ENCODE measurements at regions of chr22 and their contacts with region 1.

Region 1: GRCh38 chr22:36144886-36145541 is 15.5 kb downstream of the APOL3 start:
- DNase-seq: peak; percentile 51
- H3K4me3 ChIP-seq: no peak overlapping the region
- H3K27ac ChIP-seq: peak overlapping the region; percentile 45
- H3K4me1 ChIP-seq: peaks cover 46% of the 10 kb centered on the region
- H3K27me3 ChIP-seq: no peaks in the 10 kb centered on the region
- CTCF ChIP-seq: peak; percentile 85

Region 2: DNA sequence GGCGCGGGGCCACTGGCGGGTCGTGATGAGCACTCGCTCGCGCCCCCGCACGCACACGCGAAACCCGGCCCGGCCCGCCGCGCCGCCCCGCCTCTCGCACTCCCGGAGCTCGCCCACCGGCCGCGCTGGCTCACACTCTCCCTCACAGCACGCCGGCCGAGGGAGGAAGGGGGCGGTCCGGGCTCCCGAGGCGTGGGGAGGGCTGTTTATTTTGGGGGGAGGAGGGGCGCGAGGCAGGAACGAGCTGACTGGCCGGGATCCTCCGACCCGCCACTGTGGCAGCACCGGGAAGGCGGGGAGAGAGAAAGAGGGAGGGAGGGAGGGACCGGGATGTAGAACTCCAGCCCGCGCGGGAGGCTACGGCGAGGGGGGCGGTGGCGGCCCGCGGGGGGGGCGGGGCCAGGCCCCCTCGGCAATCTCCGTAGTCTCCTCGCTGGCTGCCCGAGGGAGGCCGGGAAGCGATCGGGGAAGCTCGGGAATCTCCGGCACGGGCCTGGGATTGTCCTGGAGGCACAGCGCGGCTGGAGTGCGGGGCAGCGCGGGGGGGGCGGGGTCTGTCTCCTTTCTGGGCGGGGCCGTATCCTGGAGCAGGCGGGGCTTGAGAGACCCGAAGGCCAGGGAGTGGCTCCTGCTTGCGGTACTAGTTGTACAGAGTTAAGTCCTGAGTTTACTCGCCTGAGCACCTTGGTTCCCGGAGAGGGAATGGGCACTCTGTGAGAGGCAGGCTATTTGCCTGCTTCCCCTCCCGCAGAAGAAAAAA is 116.2 kb before region 1 on chr22 and contains the start of gene RBFOX2:
- intact Hi-C with region 1: no loop called
- DNase-seq: peak; percentile 98
- H3K4me3 ChIP-seq: peak within 1 kb of the TSS; percentile 90
- H3K27ac ChIP-seq: peak within 1 kb of the TSS; percentile 92
- H3K4me1 ChIP-seq: peaks cover 37% of the 10 kb centered on the region
- H3K27me3 ChIP-seq: no peaks in the 10 kb centered on the region
- CTCF ChIP-seq: no peak
- total RNA-seq, gene RBFOX2: 75.4 TPM

Region 3: DNA sequence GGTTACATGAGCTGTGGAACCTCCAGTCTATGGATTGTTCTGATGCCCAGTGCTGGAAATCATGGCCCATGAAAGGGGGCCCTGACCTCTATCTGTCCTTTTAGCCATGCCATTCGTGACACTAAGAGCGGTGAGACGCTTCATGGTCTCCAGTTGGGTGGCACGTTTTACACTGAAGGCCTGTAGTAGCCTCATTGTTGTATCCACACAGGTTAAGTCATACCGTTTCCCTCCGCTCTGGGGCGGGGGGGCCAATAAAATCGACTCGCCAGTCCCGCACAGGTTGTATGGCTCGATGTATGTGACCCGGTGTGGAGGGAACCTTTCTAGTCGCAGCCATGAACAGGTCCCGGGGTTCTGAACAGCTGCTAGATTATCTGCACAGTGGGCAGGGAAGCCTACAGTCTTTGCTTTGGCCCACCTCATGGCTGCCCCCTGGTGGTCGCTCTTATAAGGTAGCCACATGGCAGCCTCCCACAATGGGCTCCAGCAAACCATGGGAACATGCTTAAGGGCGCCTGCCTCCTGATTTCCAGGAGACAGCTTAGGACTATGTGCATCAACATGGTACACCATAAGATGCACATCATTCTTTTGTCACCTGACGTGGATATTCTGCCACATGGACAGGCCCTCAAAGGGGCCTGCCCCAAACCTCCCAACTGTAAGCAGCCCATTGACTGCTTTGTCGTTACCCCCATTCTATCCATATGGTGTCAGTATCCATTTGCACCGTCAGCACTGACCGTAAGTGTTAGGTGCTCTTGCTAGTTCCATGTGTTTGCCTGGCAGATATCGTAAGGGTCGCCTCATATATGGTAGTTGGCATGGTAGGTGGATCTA is 35.2 kb after region 1 on chr22:
- intact Hi-C with region 1: loop called (anchors 5 kb)
- DNase-seq: peak; percentile 89
- H3K4me3 ChIP-seq: no peak overlapping the region
- H3K27ac ChIP-seq: no peak overlapping the region
- H3K4me1 ChIP-seq: peaks cover 7% of the 10 kb centered on the region
- H3K27me3 ChIP-seq: no peaks in the 10 kb centered on the region
- CTCF ChIP-seq: peak; percentile 93